Dorsolateral prefrontal cortex (tissue), 120 donors: ENCODE measurements at regions of chr6 and their contacts with region 1.

Region 1: GRCh38 chr6:137415127-137415833 is 78.9 kb downstream of the OLIG3 start:
- DNase-seq: peak in 8 of 10 donors; percentile 30 to 73 (median 59)
- H3K4me3 ChIP-seq: peak overlapping the region in 58 of 59 donors; percentile 29 to 73 (median 54)
- H3K27ac ChIP-seq: peak overlapping the region in 56 of 59 donors; percentile 8 to 89 (median 72)
- H3K27me3 ChIP-seq: peaks cover 0 to 30% (median 0%) of the 10 kb centered on the region in 45 donors
- CTCF ChIP-seq: peak; percentile 25 to 89 (median 71)

Region 2: DNA sequence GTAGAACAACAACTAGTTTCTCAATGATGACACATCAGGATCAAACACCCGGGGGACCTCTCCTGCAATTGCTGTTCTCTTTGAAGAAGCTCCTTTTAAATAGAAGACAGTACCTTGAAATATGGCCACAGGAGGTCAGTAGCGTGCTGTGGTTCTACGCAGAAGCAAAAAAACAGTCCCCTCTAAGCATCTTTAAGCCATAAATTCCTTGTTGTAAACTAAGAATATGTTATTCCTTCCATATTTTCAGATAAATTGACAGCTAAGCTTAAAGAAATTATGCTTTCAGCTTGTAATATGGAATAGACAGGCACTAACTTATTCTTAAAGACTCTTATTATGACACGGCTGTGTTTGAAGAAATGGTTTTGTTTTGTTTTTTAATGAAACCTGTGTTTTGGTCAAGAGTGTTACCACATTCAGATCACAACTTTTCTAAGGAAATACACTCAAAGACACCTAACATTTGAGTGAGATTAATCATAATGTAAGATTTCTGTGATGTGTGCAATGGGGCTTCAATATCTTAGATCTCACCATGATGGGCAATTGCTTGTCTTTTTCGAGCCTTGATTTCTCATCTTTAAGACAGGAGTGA is 320.8 kb before region 1 on chr6:
- intact Hi-C with region 1: loop called in 1 of 2 experiments (anchors 5 kb)
- DNase-seq: peak in 4 of 10 donors; percentile 21 to 60 (median 44)
- H3K4me3 ChIP-seq: peak overlapping the region in 6 of 59 donors; percentile 3 to 24 (median 12)
- H3K27ac ChIP-seq: peak overlapping the region in 22 of 59 donors; percentile 3 to 68 (median 51)
- H3K27me3 ChIP-seq: no peaks in the 10 kb centered on the region
- CTCF ChIP-seq: peak; percentile 54 to 90 (median 76)

Region 3: DNA sequence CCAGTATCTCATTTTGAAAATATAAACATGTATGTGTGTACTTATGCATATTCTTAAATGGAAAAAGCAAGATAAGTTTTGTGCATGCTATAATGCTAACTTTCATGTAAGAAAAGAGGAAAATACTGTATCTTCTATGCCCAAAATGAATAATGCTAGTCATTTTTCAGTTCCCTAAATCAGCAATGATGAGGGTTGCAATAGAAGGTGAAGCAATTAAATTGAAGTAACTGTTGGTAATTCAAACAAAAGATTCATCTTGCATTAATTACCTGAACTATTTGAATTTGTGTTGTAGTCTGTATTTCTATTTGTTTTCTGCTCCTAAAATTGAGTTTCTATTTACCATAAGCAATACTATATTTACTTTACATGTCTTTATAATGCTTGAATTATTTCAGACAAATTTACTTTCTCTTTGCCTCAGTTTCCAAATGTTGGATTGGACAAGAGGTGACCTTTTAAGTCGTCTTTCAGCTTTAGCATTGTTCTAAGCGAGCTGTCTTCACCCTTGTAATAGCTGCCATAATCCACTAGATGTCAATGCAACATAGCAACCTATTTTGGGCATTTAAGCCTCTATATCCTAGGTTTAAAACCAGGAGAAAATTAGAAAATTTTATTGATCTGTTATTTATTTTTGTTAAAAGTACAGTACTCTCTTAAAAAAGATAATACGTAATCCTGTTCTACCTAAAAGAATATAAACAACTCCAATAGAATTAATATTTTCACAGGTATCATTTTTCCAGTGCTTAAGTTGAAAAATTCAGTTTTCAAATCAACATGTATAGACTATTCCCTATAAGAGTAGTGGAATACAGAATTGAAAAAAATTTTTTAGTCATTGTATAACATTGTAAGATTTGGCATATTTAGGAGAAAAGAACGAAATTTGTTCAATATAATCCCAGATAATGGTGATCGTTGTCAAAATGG is 143.8 kb before region 1 on chr6:
- intact Hi-C with region 1: loop called (anchors 1 to 5 kb)
- DNase-seq: no peak
- H3K4me3 ChIP-seq: no peak overlapping the region
- H3K27ac ChIP-seq: no peak overlapping the region
- H3K27me3 ChIP-seq: peaks cover 0 to 4% (median 0%) of the 10 kb centered on the region in 45 donors
- CTCF ChIP-seq: peak; percentile 71 to 97 (median 89)

Region 4: DNA sequence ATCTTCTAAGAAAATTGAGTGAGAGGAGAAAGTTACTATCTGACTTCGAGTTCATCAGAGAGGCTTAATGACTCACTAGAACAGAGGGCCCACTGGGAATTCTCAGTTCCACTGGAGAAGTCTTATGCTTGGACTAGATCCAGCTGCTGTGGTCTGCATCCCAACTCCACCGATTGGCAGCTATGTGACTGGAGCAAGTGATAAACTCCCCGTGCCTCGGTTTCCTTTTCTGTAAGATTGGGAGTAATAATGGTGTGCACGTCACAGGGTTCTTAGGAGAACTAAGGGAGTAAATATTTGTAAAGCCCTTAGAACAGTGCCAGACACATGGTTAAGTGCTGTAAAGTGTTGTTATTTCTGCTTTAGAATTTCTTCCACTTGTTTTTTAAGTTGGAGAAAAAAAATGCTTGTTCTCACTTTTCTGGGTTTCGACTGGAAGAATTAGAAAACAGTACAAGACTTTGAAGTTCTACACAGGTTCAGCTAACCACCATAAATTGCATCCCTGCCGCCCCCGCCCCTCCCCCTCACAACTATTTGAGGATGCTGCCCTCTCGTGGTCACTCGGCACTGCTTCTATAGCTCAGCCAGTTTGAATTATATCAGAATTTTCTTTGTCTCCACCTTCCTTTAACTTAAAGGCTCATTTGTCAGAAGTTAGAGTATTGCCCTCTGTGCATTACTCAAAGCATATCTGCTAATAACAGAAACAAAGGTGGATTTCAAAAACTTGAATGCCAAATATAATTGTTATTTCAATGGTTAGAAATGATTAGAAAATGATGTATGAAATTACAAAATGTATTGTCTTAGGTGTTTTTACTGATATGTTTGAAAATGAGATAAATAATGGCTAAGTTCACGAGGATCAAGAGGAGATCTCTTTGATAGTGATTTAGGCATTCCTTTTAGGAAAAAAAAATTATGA is 101.1 kb before region 1 on chr6:
- intact Hi-C with region 1: loop called in 1 of 2 experiments (anchors 2 kb)
- DNase-seq: peak in 9 of 10 donors; percentile 18 to 78 (median 60)
- H3K4me3 ChIP-seq: peak overlapping the region in 26 of 59 donors; percentile 2 to 58 (median 24)
- H3K27ac ChIP-seq: peak overlapping the region in 2 of 59 donors; percentile 33 to 61
- H3K27me3 ChIP-seq: no peaks in the 10 kb centered on the region
- CTCF ChIP-seq: peak; percentile 66 to 89 (median 80)

Region 5: GRCh38 chr6:137341681-137342195 is 73.5 kb before region 1 on chr6:
- intact Hi-C with region 1: loop called (anchors 1 to 5 kb)
- DNase-seq: peak; percentile 35 to 83 (median 70)
- H3K4me3 ChIP-seq: peak overlapping the region in 29 of 59 donors; percentile 1 to 53 (median 22)
- H3K27ac ChIP-seq: peak overlapping the region in 58 of 59 donors; percentile 42 to 99 (median 80)
- H3K27me3 ChIP-seq: peaks cover 0 to 14% (median 0%) of the 10 kb centered on the region in 45 donors
- CTCF ChIP-seq: peak in 53 of 56 donors; percentile 24 to 75 (median 50)

Region 6: DNA sequence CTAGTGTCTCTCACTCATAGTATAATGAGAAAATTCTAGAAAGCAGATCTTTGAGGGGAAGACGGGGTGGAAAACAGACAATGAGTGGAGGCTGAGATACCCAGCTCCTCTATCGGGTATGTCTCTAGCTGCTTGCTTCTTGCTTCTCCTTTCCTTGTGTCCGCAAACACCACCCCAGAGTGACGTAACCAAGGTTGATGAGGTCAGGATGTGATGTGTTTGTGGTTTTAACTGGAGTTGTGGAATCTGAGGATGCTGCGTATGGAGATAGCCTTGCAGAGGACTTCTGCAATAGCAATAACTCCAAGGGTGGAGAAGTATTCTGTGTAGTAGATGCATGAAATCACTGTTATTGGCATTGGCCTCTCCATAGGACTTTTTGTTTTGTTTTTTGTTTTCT is 63.4 kb before region 1 on chr6:
- intact Hi-C with region 1: no loop called
- DNase-seq: no peak
- H3K4me3 ChIP-seq: no peak overlapping the region
- H3K27ac ChIP-seq: peak overlapping the region in 38 of 59 donors; percentile 2 to 99 (median 53)
- H3K27me3 ChIP-seq: no peaks in the 10 kb centered on the region
- CTCF ChIP-seq: no peak

Region 7: GRCh38 chr6:137471986-137472385 is 56.7 kb after region 1 on chr6:
- intact Hi-C with region 1: no loop called
- DNase-seq: peak in 1 of 10 donors; percentile 82
- H3K4me3 ChIP-seq: no peak overlapping the region
- H3K27ac ChIP-seq: no peak overlapping the region
- H3K27me3 ChIP-seq: peaks cover 0 to 57% (median 17%) of the 10 kb centered on the region in 45 donors
- CTCF ChIP-seq: no peak

Region 8: DNA sequence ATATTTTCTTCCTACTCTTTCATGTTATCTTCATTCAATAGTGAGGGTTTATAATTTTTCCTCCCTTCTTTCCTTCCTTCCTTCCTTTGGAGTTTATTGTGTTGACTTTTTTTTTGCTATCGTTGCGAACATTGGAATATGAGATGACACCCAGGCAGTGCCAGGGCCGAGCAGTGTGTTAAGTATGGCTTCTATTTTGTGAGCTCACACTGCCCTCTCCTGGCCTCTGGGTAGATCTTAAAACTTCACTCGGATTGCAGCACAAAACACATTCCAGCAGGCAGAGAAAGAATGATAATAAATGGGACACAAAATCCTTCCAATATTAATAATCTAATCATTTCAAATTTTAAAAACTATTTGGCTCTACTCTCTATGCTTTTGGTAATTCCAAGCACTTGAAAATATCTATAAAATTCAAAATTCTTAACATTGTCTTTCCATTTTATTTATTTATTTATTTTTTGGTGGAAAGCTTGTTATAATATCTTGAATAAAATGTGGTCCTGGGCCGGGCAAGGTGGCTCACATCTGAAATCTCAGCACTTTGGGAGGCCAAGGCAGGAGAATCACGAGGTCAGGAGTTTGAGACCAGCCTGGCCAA is 226.3 kb after region 1 on chr6:
- intact Hi-C with region 1: loop called (anchors 5 to 10 kb)
- DNase-seq: peak; percentile 45 to 89 (median 74)
- H3K4me3 ChIP-seq: no peak overlapping the region
- H3K27ac ChIP-seq: peak overlapping the region in 14 of 59 donors; percentile 3 to 57 (median 38)
- H3K27me3 ChIP-seq: no peaks in the 10 kb centered on the region
- CTCF ChIP-seq: peak; percentile 51 to 92 (median 82)